Activated CD4-positive, alpha-beta memory T cell treated with anti-CD3 and anti-CD28 coated beads, Interleukin-2, amount 10 ng/mL, durations not matched to agents 7 days and 5 days (primary cell): ENCODE measurements at regions of chr6 and their contacts with region 1.

Region 1: DNA sequence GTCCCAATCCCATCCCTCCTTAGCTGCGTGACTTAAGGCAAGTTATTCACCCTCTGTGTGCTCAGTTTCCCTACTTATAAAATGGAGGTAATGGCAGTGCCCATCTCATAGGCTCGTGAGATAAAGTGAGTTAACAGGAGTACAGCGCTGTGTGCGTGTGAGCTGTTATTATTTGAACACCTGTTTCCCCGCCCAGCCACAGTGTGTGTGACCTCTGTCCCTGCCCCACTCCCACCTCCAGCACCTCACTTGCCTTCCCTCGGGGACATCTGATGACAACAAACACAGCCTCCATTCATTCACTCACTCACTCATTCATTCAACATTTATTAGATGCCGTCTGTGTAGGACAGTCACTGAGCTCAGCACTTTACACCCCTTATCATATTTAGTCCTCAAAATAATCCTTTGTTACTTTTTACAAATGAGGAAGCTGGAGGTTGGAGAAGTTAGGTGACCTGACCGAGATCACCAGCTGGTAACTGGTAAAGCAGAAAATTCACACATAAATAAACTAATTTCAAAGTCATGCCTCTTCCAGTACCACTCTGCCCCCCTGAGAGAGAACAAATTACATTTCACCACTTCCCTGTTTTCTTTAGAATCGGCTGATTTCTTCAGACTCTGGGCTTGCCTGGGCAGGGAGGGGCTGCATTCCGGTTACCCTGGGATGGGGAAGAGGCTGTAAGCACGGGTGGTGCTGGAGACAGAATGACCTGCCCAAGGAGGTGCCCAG is 58.6 kb downstream of the CPNE5 start:
- DNase-seq: no peak
- H3K4me3 Mint-ChIP-seq: no peak overlapping the region
- H3K27ac Mint-ChIP-seq: no peak overlapping the region
- H3K4me1 Mint-ChIP-seq: peaks cover 10% of the 10 kb centered on the region
- H3K27me3 Mint-ChIP-seq: peaks cover 20% of the 10 kb centered on the region

Region 2: GRCh38 chr6:35920793-35921732 is 859.5 kb before region 1 on chr6 and contains the start of gene SRPK1:
- CTCF ChIA-PET with region 1: no interaction called
- POLR2A ChIA-PET with region 1: no interaction called
- DNase-seq: peak; percentile 90
- H3K4me3 Mint-ChIP-seq: peak within 1 kb of the TSS; percentile 95
- H3K27ac Mint-ChIP-seq: peak within 1 kb of the TSS; percentile 90
- H3K4me1 Mint-ChIP-seq: peaks cover 41% of the 10 kb centered on the region
- H3K27me3 Mint-ChIP-seq: no peaks in the 10 kb centered on the region
- total RNA-seq, gene SRPK1: 83.0 to 85.4 TPM

Region 3: DNA sequence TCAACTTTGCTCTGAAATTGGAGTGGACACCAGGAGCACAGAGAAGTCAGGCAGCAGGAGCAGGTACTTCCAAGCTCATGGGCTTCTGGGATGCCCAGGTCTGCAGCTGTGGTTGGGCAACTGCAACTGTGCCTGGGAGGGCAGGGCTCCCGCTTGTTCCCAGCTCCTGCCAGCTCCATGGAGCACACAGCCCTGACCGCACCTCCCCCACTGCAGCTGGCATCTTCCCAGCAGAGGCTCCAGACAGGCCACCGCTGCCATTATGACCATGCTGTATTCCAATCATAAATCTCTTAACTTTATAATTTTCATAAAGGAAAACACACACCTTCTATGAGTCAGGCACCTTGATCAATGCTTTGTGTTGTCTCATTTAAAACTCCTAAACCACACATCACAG is 270.2 kb before region 1 on chr6:
- CTCF ChIA-PET with region 1: no interaction called
- POLR2A ChIA-PET with region 1: no interaction called
- DNase-seq: no peak
- H3K4me3 Mint-ChIP-seq: no peak overlapping the region
- H3K27ac Mint-ChIP-seq: no peak overlapping the region
- H3K4me1 Mint-ChIP-seq: peaks cover 24% of the 10 kb centered on the region
- H3K27me3 Mint-ChIP-seq: no peaks in the 10 kb centered on the region

Region 4: DNA sequence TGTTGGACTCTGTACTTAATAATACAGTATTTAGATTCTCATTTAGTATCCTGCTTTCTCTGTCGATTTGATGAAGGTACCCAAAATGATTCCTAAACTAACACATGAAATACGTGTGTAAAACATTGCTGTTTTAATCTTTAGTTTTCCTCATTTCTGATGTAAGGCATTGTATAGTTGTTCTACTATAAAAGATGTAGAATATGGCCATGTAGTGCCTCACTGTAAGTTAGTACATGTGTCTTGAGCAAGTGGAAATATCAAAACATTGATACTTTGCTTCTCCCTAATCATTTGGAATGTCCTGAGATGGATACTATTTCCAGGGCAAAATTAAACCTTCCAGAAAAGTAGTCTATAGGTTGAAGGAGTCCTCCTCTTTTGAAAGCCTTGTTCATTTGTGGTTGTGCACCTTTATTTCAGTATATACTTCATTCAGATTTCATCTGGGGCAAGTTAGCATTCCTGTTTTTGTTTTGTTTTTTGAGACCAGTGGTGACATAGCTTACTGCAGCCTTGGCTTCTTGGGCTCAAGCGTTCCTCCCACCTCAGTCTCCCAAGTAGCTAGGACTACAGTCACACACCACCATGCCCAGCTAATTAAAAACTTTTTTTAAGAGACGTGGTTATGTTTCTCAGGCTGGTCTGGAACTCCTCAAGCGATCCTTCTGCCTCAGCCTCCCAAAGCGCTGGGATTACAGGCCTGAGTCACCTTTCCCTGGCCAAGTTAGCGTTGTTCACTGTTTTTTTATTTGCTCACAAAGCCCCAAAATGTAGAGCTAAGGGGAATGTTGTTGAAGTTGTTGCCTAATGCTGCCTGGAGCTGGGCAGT is 174.8 kb before region 1 on chr6:
- CTCF ChIA-PET with region 1: interaction called, 13 read pairs
- POLR2A ChIA-PET with region 1: interaction called, 4 read pairs
- DNase-seq: no peak
- H3K4me3 Mint-ChIP-seq: no peak overlapping the region
- H3K27ac Mint-ChIP-seq: peak overlapping the region; percentile 32
- H3K4me1 Mint-ChIP-seq: peaks cover 69% of the 10 kb centered on the region
- H3K27me3 Mint-ChIP-seq: no peaks in the 10 kb centered on the region

Region 5: DNA sequence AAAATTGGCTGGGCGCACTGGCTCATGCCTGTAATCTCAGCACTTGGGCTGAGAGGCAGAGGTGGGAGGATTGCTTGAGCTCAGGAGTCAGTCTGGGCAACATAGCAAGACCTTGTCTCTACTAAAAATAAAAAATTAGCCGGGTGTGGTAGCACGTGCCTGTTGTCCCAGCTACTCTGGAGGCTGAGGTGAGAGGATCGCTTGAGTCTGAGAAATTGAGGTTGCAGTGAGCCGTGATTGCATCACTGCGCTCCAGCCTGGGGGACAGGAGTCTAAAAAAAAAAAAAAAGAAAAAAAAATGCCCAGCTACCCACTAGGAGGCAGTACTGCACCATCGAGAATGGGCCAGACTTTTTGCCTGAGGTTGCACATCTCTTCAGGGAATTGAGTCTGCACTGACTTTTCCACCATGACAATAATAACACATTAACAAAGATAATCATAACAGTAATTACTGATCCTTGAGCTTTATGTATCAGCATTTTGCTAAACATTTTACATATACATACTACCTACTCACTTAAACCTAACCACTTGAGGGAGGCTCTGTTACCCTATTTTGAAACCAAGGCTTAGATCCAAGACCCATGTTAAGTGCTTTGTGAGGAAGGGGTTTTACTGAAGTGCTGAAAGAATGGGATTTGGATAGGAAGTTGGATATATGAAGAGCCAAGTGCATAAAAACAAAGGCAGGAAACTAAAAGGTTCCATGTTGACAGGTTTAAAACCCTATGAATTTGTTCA is 165.4 kb before region 1 on chr6:
- CTCF ChIA-PET with region 1: interaction called, 47 read pairs
- POLR2A ChIA-PET with region 1: interaction called, 4 read pairs
- DNase-seq: peak; percentile 50
- H3K4me3 Mint-ChIP-seq: no peak overlapping the region
- H3K27ac Mint-ChIP-seq: peak overlapping the region; percentile 12
- H3K4me1 Mint-ChIP-seq: peaks cover 33% of the 10 kb centered on the region
- H3K27me3 Mint-ChIP-seq: no peaks in the 10 kb centered on the region

Region 6: GRCh38 chr6:36623547-36624459 is 156.8 kb before region 1 on chr6:
- CTCF ChIA-PET with region 1: interaction called, 15 read pairs
- POLR2A ChIA-PET with region 1: no interaction called
- DNase-seq: peak; percentile 82
- H3K4me3 Mint-ChIP-seq: no peak overlapping the region
- H3K27ac Mint-ChIP-seq: peak overlapping the region; percentile 0
- H3K4me1 Mint-ChIP-seq: peaks cover 33% of the 10 kb centered on the region
- H3K27me3 Mint-ChIP-seq: no peaks in the 10 kb centered on the region

Region 7: DNA sequence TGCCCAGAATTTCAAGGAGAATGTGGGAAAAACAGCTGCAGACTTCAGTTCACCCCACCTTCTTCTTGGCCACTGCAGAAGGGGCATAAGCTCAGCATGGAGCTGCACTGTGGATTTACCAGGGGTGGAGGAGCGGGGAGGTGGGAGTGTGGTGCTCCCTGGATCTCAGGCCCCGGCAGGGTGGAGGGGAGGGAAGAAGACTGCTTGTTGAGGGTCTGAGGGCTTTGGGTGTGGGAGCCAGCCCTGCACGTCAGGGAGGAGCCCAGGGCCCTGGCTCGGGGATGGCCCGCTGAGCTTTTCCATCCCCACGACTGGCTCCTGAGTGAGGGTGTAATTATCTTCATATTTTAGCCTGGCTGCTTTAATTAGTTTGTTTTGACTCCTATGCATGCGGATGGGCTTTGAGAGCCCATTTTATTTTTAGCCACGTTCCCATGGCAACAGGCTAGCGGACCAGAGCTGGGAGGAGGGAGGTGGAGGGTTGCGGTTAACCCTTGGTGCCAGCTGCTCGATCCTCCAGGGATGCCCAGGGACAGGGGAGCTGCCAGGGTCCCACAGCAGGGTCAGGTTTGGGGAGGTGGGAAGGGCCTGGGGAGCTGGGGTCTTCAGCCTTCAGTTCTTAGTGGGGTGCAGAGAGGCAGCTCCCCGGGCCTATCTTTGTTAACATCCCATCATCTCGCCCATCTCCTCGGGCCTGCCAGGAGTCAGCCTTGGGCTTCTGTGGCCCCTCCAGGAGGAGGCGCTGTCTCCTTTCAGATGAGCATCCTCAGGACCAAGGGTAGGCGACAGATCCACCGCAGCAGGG is 14.8 kb before region 1 on chr6:
- CTCF ChIA-PET with region 1: interaction called, 327 read pairs
- POLR2A ChIA-PET with region 1: interaction called, 83 read pairs
- DNase-seq: peak; percentile 87
- H3K4me3 Mint-ChIP-seq: no peak overlapping the region
- H3K27ac Mint-ChIP-seq: no peak overlapping the region
- H3K4me1 Mint-ChIP-seq: peaks cover 39% of the 10 kb centered on the region
- H3K27me3 Mint-ChIP-seq: no peaks in the 10 kb centered on the region

Region 8: DNA sequence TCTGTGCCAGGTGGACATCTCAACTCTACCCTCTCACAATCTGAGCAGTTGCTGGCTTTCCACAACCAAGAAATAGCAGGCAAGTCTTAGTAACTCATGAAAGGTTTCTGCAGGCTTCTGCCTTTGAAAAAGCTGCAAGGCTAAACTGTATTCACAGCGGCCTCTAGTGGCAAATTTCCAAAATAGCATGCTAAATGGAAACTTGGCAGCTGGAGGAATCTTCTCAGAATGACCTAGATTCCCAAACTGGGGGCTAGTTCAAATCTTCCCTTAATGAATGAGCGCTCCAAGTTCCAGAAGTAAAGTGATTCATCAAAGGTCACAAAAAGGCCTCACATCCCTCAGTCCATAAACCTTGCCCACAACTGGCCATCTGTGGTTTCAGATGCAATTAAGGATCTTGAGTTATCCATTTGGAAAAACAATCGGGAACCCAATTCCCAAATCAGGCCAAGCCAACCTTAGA is 70.6 kb after region 1 on chr6:
- CTCF ChIA-PET with region 1: interaction called, 48 read pairs
- POLR2A ChIA-PET with region 1: interaction called, 3 read pairs
- DNase-seq: peak; percentile 46
- H3K4me3 Mint-ChIP-seq: no peak overlapping the region
- H3K27ac Mint-ChIP-seq: no peak overlapping the region
- H3K4me1 Mint-ChIP-seq: peaks cover 5% of the 10 kb centered on the region
- H3K27me3 Mint-ChIP-seq: no peaks in the 10 kb centered on the region

Region 9: DNA sequence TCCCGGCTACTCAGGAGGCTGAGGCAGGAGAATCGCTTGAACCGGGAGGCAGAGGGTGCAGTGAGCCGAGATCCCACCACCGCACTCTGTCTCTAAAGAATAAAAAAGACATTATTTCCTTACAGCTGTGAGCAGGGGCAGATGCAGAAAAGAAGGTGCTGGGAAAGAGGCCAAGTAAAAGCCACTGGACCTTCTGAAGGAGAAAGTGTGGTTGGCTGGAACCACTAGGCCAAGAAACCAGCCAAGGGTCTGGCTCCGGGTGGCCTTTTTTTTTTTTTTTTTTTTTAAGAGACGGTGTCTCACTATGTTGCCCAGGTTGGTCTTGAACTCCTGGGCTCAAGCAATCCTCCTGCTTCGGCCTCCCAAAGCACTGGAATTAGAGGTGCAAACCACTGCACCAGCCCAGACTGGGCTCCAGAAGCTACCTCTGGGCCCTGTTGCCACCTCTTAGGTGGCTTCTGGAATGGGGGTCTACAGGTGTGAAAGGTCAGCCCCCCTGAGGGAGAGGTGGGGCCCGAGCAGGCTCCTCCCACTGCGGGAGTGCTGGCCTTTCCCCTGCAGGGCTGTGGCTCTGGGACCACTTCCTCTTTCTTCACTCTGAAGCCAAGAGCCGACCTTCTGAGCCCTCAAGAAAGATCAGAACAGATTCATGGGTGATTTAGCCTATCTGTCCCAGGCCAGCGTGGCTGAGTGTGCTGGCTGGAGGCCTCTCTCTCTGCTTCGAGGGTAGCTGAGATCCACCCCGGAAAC is 224.6 kb after region 1 on chr6 and contains the start of gene FGD2:
- CTCF ChIA-PET with region 1: interaction called, 10 read pairs
- POLR2A ChIA-PET with region 1: no interaction called
- DNase-seq: no peak
- H3K4me3 Mint-ChIP-seq: peak within 1 kb of the TSS; percentile 62
- H3K27ac Mint-ChIP-seq: peak within 1 kb of the TSS; percentile 31
- H3K4me1 Mint-ChIP-seq: peaks cover 29% of the 10 kb centered on the region
- H3K27me3 Mint-ChIP-seq: no peaks in the 10 kb centered on the region
- total RNA-seq, gene FGD2: 4.7 to 4.9 TPM